ENCODE measurements at regions of chr2 and their contacts with region 1.

Region 1: GRCh38 chr2:25362049-25362433 is 20.3 kb upstream of the DNMT3A start:
- DNase-seq: peak; percentile 94
- CTCF ChIP-seq: peak; percentile 91

Region 2: GRCh38 chr2:24907116-24907515 is 454.9 kb before region 1 on chr2:
- CTCF ChIA-PET with region 1: no interaction called
- POLR2A ChIA-PET with region 1: no interaction called
- DNase-seq: no peak
- CTCF ChIP-seq: no peak

Region 3: GRCh38 chr2:25145803-25146202 is 216.2 kb before region 1 on chr2:
- CTCF ChIA-PET with region 1: no interaction called
- POLR2A ChIA-PET with region 1: no interaction called
- DNase-seq: no peak
- CTCF ChIP-seq: no peak

Region 4: GRCh38 chr2:25337276-25337675 is 24.8 kb before region 1 on chr2:
- CTCF ChIA-PET with region 1: interaction called, 32 read pairs
- POLR2A ChIA-PET with region 1: interaction called, 5 read pairs
- DNase-seq: no peak
- CTCF ChIP-seq: no peak

Region 5: GRCh38 chr2:25376750-25377621 is 14.9 kb after region 1 on chr2:
- CTCF ChIA-PET with region 1: interaction called, 70 read pairs
- POLR2A ChIA-PET with region 1: interaction called, 11 read pairs
- DNase-seq: peak; percentile 95
- CTCF ChIP-seq: peak; percentile 89

Region 6: DNA sequence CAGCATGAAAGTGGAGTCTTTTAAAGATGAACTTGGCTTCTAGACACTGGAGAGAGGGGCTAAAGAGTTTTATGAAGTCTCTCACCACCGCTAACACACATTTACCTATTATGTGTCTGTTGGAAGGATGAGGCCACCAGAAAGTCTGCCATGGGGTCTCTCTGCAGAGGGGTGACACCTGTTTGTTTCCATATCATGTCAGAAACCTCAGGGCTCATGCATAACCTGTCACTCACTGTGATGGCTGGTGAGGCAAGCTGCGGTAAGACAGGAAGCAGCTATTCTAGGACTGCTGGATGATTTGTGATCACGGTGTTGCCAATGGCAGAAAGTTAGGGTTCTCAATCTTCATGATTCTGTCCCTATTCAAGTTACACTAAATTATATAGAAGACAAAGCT is 40.4 kb after region 1 on chr2:
- CTCF ChIA-PET with region 1: interaction called, 10 read pairs
- POLR2A ChIA-PET with region 1: no interaction called
- DNase-seq: peak; percentile 58
- CTCF ChIP-seq: no peak

Region 7: GRCh38 chr2:25420820-25421237 is 58.8 kb after region 1 on chr2:
- CTCF ChIA-PET with region 1: interaction called, 31 read pairs
- POLR2A ChIA-PET with region 1: interaction called, 9 read pairs
- DNase-seq: peak; percentile 66
- CTCF ChIP-seq: no peak

Measured in GM10248 (cell line).